PC-9 (cell line): ENCODE measurements at regions of chr18 and their contacts with region 1.

Region 1: GRCh38 chr18:5040476-5040875 is 156.6 kb downstream of the AKAIN1 start:
- DNase-seq: no peak
- H3K4me3 ChIP-seq: no peak overlapping the region
- H3K27ac ChIP-seq: no peak overlapping the region
- H3K4me1 ChIP-seq: no peaks in the 10 kb centered on the region
- H3K27me3 ChIP-seq: peaks cover 2% of the 10 kb centered on the region; the same call in 1 of the 2 replicates
- CTCF ChIP-seq: no peak

Region 2: GRCh38 chr18:3424280-3424890 is 1616.1 kb before region 1 on chr18:
- CTCF ChIA-PET with region 1: no interaction called
- POLR2A ChIA-PET with region 1: no interaction called
- intact Hi-C with region 1: no loop called
- DNase-seq: peak in 1 of 2 experiments; percentile 39
- H3K4me3 ChIP-seq: no peak overlapping the region
- H3K27ac ChIP-seq: peak overlapping the region; percentile 33; the same call in 1 of the 2 replicates
- H3K4me1 ChIP-seq: peaks cover 19% of the 10 kb centered on the region
- H3K27me3 ChIP-seq: no peaks in the 10 kb centered on the region
- CTCF ChIP-seq: no peak

Region 3: GRCh38 chr18:5073026-5073944 is 32.8 kb after region 1 on chr18:
- CTCF ChIA-PET with region 1: no interaction called
- POLR2A ChIA-PET with region 1: no interaction called
- intact Hi-C with region 1: loop called (anchors 1 kb)
- DNase-seq: no peak
- H3K4me3 ChIP-seq: no peak overlapping the region
- H3K27ac ChIP-seq: no peak overlapping the region
- H3K4me1 ChIP-seq: no peaks in the 10 kb centered on the region
- H3K27me3 ChIP-seq: no peaks in the 10 kb centered on the region
- CTCF ChIP-seq: peak; percentile 45